ENCODE measurements at regions of chr1 and their contacts with region 1.

Region 1: GRCh38 chr1:223207293-223208066 is 64.4 kb upstream of the TLR5 start:
- DNase-seq: no peak
- ATAC-seq: no peak
- H3K4me3 ChIP-seq: no peak overlapping the region
- H3K4me3 Mint-ChIP-seq: no peak overlapping the region
- H3K27ac ChIP-seq: no peak overlapping the region
- H3K27ac Mint-ChIP-seq: no peak overlapping the region
- H3K4me1 ChIP-seq: no peaks in the 10 kb centered on the region
- H3K4me1 Mint-ChIP-seq: no peaks in the 10 kb centered on the region
- H3K27me3 ChIP-seq: peaks cover 0 to 10% of the 10 kb centered on the region in 2 experiments
- H3K27me3 Mint-ChIP-seq: peaks cover 0 to 3% of the 10 kb centered on the region in 2 donors

Region 2: DNA sequence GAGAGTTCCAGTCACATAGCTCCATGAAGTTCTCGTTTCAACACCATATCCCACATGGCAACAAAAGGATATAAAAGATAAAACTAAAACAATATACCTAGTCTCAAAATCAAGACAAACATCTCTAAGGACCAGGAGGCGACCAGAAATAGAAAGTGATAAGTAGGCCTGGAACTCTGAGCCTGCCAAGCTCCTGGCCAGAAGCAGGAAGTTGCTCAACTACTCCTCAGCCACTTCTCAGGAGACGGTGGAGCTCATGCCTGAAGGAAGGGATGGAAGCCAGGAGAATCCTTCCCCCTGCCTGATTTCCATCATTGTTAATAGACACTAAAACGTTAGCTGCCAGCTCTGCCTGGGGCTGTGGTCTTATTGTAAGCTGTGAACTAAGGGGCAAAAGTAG is 297.9 kb before region 1 on chr1:
- CTCF ChIA-PET with region 1: no interaction called
- POLR2A ChIA-PET with region 1: no interaction called
- DNase-seq: no peak
- ATAC-seq: no peak
- H3K4me3 ChIP-seq: no peak overlapping the region
- H3K4me3 Mint-ChIP-seq: no peak overlapping the region
- H3K27ac ChIP-seq: no peak overlapping the region
- H3K27ac Mint-ChIP-seq: no peak overlapping the region
- H3K4me1 ChIP-seq: no peaks in the 10 kb centered on the region
- H3K4me1 Mint-ChIP-seq: no peaks in the 10 kb centered on the region
- H3K27me3 ChIP-seq: no peaks in the 10 kb centered on the region
- H3K27me3 Mint-ChIP-seq: no peaks in the 10 kb centered on the region

Region 3: DNA sequence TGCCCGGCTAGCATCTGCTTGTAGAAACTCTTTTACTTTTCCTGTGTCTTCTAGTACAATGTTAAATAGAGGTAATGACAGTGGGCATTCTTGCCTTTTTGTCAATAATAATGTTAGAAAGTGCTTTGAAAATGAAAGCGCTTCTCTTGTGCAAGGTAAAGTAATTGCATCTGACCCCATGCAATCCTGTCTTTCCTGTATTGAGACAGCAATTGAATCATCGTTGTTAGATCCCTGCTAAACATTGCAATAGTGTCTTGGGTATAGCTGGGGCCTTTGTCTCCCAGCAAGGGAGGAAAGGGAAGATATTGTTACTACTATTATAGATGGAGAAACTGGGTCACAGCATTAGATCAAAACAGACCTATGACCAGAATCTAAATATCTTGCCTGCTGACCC is 145.3 kb before region 1 on chr1:
- CTCF ChIA-PET with region 1: no interaction called
- POLR2A ChIA-PET with region 1: no interaction called
- DNase-seq: no peak
- ATAC-seq: no peak
- H3K4me3 ChIP-seq: no peak overlapping the region
- H3K4me3 Mint-ChIP-seq: no peak overlapping the region
- H3K27ac ChIP-seq: no peak overlapping the region
- H3K27ac Mint-ChIP-seq: no peak overlapping the region
- H3K4me1 ChIP-seq: no peaks in the 10 kb centered on the region
- H3K4me1 Mint-ChIP-seq: no peaks in the 10 kb centered on the region
- H3K27me3 ChIP-seq: peaks cover 0 to 2% of the 10 kb centered on the region in 2 experiments
- H3K27me3 Mint-ChIP-seq: peaks cover 0 to 2% of the 10 kb centered on the region in 2 donors

Region 4: GRCh38 chr1:223087291-223088255 is 119.9 kb before region 1 on chr1:
- CTCF ChIA-PET with region 1: no interaction called
- POLR2A ChIA-PET with region 1: no interaction called
- DNase-seq: no peak
- ATAC-seq: no peak
- H3K4me3 ChIP-seq: no peak overlapping the region
- H3K4me3 Mint-ChIP-seq: no peak overlapping the region
- H3K27ac ChIP-seq: no peak overlapping the region
- H3K27ac Mint-ChIP-seq: peak overlapping the region in 1 of 2 donors; percentile 50
- H3K4me1 ChIP-seq: no peaks in the 10 kb centered on the region
- H3K4me1 Mint-ChIP-seq: peaks cover 8 to 11% (median 9%) of the 10 kb centered on the region in 3 donors
- H3K27me3 ChIP-seq: peaks cover 0 to 6% of the 10 kb centered on the region in 2 experiments
- H3K27me3 Mint-ChIP-seq: no peaks in the 10 kb centered on the region

Region 5: DNA sequence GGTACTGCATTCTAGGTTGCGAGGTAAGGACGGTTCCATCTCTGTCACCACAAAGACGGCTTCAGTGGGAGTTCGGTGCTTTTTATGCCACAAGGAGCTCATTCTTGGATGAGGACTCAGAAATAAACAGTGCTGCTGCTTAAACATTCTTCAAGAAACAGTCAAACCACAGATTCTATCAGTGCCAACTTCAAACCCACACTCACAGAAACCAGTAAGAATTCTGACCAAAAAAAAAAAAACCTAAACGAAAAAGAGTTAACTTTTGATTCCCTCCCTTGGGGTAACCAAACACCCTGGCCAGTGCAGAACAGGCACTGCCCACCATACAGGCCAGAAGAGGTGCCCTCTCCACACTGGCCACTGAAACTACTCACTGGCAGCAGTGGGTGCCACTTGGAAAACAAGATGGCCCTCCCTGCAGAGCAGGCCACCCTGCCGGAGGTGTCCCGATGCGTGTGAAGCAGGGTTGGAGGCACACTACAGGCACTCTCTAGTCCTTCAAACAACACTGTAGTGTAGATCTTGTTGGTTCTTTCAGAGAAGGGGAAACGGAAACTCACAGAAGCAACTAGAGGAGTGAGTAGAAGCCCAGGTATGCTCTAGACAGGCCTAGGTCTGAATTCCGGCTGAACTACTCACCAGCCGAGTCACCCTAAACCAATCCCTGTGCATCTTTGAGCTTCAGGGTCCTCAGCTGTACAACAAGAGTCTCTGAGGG is 22.8 kb after region 1 on chr1:
- CTCF ChIA-PET with region 1: interaction called in 1 of 2 experiments, 4 read pairs
- POLR2A ChIA-PET with region 1: interaction called in 1 of 2 experiments, 12 read pairs
- DNase-seq: peak in 13 of 35 experiments; percentile 9 to 59 (median 23)
- ATAC-seq: peak; percentile 77 to 82 (median 78)
- H3K4me3 ChIP-seq: peak overlapping the region in 1 of 2 donors; percentile 4
- H3K4me3 Mint-ChIP-seq: peak overlapping the region; percentile 48 to 78 (median 58)
- H3K27ac ChIP-seq: peak overlapping the region; percentile 69
- H3K27ac Mint-ChIP-seq: peak overlapping the region; percentile 98 to 99
- H3K4me1 ChIP-seq: peaks cover 59 to 72% of the 10 kb centered on the region in 2 experiments
- H3K4me1 Mint-ChIP-seq: peaks cover 66 to 81% (median 73%) of the 10 kb centered on the region in 3 donors
- H3K27me3 ChIP-seq: peaks cover 0 to 5% of the 10 kb centered on the region in 2 experiments
- H3K27me3 Mint-ChIP-seq: peaks cover 0 to 5% of the 10 kb centered on the region in 2 donors

Measured in T-cell (primary cell).